ENCODE measurements at regions of chr9 and their contacts with region 1.

Region 1: DNA sequence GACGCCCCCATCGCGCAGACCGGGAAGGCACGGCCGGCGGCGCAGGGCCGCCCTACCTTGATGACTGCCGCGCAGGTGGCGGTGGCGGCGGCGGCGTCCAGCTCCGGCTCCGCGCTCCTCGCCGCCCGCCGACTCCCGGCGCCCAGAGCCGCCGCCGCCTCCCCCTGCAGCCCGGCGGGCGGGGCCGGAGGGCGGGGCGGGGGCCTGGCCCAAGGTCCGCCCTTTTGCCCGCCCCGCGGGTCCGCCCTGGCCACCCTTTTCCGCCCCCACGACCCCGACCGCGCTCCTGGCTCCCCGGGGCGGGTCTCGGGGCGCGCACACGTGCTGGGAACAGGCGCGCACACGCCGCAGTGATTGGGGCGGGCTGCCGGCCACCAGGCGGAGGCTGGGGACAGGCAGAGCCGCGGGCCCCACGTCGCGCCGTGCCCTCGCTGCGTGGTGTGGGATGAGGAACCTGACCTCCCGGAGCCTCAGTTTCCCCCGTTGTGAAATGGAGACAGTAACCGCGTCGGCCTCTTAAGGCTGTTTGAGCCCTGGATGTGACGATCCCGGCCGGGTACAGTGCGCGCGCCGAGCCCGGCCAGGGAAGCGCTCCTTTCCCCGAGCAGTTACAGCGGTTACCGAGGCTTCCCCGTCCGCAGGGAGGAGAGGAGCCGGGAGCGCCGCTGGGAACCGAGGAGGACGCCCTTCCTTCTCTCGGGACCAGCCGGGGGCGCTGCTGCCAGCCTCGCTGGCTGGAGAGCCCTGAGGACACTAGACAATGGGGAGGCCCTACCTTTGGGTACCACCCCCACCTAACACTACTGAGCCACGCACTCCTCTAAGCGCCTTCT is at the start of gene CORO2A:
- DNase-seq: peak; percentile 83
- H3K4me3 ChIP-seq: peak within 1 kb of the TSS; percentile 69 to 85 (median 70)
- H3K27ac ChIP-seq: peak within 1 kb of the TSS; percentile 41
- H3K4me1 ChIP-seq: peaks cover 16% of the 10 kb centered on the region
- H3K27me3 ChIP-seq: no peaks in the 10 kb centered on the region
- CTCF ChIP-seq: peak; percentile 15 to 57
- total RNA-seq, gene CORO2A: 9.7 to 19.7 TPM

Region 2: GRCh38 chr9:98074115-98074990 is 118.4 kb before region 1 on chr9:
- CTCF ChIA-PET with region 1: no interaction called
- dilution Hi-C with region 1: no loop called
- in situ Hi-C with region 1: no loop called
- intact Hi-C with region 1: loop called (anchors 1 kb)
- DNase-seq: peak; percentile 33
- H3K4me3 ChIP-seq: no peak overlapping the region
- H3K27ac ChIP-seq: no peak overlapping the region
- H3K4me1 ChIP-seq: no peaks in the 10 kb centered on the region
- H3K27me3 ChIP-seq: no peaks in the 10 kb centered on the region
- CTCF ChIP-seq: peak; percentile 93 to 94

Region 3: DNA sequence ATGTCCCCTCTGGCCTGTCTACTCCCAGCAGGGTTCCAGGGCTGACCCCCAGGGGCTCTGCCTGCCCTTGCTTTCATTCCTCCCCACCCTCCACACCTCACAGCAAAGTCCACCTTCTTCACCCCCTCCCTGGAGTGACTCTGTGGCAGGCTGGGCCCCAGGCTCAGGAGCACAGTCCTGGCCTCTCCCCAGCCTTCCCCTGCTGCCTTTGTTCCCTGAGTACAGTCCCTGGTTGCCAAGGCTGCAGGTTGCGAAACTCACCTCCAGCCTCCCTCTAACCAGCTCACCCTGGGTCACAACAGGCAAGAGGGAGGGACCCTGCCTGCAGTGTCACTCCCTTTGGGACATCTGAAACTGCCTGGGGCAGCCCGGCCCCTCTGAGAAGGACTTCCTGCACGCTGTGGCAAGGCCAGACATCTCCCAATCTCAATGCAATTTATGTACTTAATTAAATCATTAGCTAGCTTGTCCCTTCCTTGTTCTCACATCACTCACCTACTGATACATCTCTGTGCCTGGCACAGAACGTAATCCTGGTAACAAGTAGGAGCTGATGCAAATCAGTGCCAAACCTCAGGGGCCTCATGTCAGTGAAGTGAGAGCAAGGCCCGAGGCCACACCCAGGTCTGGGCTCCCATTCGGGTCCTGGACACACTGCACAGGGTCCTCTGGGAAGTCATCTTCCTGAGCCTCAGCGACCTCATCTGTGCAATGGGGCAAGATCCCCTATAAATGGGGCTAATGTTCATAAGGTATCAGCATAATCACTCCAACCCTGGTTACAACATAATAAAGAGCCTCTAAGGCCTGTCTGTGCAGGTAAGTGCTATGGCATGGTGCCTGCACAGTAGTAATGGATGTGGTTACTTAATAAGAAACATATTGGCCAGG is 46.4 kb before region 1 on chr9:
- CTCF ChIA-PET with region 1: no interaction called
- dilution Hi-C with region 1: no loop called
- in situ Hi-C with region 1: no loop called
- intact Hi-C with region 1: loop called (anchors 1 kb)
- DNase-seq: peak; percentile 84
- H3K4me3 ChIP-seq: no peak overlapping the region
- H3K27ac ChIP-seq: peak overlapping the region; percentile 78
- H3K4me1 ChIP-seq: peaks cover 26% of the 10 kb centered on the region
- H3K27me3 ChIP-seq: no peaks in the 10 kb centered on the region
- CTCF ChIP-seq: no peak

Region 4: DNA sequence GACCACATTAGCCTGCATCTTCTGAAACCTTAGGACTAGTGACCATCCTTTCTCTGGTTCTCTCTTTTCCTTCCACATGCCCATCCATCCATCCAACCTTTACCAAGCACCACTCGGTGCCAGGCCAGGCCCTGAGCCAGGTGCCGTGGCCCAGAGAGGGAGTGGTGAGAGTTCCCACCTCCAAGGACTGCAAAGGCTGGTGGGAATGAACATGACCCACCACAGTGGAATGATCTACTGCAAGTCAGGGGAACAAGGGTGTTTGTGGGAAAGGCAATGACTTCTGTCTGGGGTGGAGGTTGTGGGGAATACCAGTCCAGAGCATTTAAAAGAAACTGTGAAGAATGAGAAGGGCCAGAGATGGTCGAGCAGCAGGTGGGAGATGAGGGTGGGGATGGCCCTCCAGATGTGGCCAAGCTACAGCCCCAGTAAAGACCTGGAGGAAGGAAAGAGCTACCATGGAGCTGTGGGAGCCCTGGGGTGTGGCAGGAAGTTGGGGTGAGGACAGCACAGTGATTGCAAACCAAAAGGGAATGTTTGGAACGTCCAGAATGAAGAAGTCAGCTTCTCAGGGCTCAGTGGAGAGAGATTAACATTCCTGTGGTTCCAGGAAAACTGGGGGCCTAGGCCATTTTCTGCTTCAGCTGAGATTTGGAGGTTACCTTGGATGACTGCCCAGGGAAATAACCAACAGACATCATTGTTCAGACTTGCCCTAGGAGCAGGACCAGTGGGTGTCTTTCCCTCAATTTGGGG is 30.3 kb after region 1 on chr9:
- CTCF ChIA-PET with region 1: no interaction called
- dilution Hi-C with region 1: no loop called
- in situ Hi-C with region 1: no loop called
- intact Hi-C with region 1: loop called (anchors 2 kb)
- DNase-seq: peak; percentile 99
- H3K4me3 ChIP-seq: no peak overlapping the region
- H3K27ac ChIP-seq: peak overlapping the region; percentile 90
- H3K4me1 ChIP-seq: peaks cover 31% of the 10 kb centered on the region
- H3K27me3 ChIP-seq: no peaks in the 10 kb centered on the region
- CTCF ChIP-seq: no peak

Region 5: GRCh38 chr9:98263482-98264357 is 71.0 kb after region 1 on chr9:
- CTCF ChIA-PET with region 1: no interaction called
- dilution Hi-C with region 1: no loop called
- in situ Hi-C with region 1: no loop called
- intact Hi-C with region 1: loop called (anchors 1 kb)
- DNase-seq: peak; percentile 51
- H3K4me3 ChIP-seq: no peak overlapping the region
- H3K27ac ChIP-seq: no peak overlapping the region
- H3K4me1 ChIP-seq: no peaks in the 10 kb centered on the region
- H3K27me3 ChIP-seq: peaks cover 2% of the 10 kb centered on the region
- CTCF ChIP-seq: peak; percentile 98

Measured in mammary epithelial cell (primary cell).